ENCODE measurements at regions of chr6 and their contacts with region 1.

Region 1: DNA sequence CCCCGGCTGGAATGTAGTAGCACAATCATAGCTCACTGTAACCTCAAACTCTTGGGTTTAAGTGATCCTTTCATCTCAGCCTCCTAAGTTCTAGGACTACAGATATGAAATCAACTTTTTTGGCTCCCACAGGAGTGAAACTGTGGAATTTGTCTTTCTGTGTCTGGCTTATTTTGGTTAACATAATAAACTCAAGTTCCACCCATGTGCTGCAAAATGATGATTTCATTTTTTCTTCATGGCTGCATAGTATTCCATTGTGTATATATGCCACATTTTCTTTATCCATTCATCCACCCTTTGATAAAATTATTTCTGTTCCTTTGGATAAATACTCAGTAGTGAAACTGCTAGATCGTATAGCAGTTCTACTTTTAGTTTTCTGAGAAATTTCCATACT is 29.9 kb downstream of the RNGTT start:
- DNase-seq: no peak
- H3K4me3 ChIP-seq: no peak overlapping the region
- H3K27ac ChIP-seq: no peak overlapping the region
- H3K4me1 ChIP-seq: no peaks in the 10 kb centered on the region
- H3K27me3 ChIP-seq: no peaks in the 10 kb centered on the region
- CTCF ChIP-seq: no peak
- EP300 ChIP-seq: no peak
- POLR2A ChIP-seq: no peak

Region 2: GRCh38 chr6:87274660-87275274 is 1658.8 kb before region 1 on chr6:
- in situ Hi-C with region 1: no loop called
- intact Hi-C with region 1: loop called (anchors 5 kb)
- DNase-seq: no peak
- H3K4me3 ChIP-seq: no peak overlapping the region
- H3K27ac ChIP-seq: no peak overlapping the region
- H3K4me1 ChIP-seq: peaks cover 0 to 16% (median 1%) of the 10 kb centered on the region in 4 donors
- H3K27me3 ChIP-seq: no peaks in the 10 kb centered on the region
- CTCF ChIP-seq: no peak
- EP300 ChIP-seq: no peak
- POLR2A ChIP-seq: no peak

Region 3: DNA sequence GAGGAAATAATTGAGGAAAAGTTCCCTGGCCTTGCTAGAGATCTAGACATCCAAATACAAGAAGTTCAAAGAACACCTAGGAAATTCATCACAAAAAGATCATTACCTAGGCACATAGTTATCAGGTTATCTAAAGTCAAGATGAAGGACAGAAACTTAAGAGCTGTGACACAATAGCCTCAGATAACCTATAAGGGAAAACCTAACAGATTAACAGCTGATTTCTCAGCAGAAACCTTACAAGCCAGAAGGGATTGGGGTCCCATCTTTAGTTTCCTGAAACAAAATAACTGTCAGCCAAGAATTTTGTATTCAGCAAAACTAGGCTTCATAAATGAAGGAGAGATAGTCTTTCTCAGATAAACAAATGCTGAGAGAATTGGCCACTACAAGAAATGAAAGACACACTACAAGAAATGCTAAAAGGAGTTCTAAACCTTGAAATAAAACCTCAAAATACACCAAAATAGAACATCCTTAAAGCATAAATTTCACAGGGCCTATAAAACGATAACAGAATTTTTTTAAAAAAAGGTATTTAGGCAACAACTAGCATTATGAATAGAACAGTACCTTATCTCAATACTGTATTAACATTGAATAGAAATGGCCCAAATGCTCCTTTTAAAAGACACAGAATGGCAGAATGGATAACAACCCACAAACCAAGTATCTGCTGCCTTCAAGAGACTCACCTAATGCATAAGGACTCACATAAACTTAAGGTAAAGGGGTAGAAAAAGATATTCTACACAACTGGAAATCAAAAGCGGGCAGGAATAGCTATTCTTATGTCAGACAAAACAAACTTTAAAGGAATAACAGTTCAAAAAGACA is 20.2 kb after region 1 on chr6:
- in situ Hi-C with region 1: no loop called
- intact Hi-C with region 1: loop called (anchors 2 kb)
- DNase-seq: no peak
- H3K4me3 ChIP-seq: no peak overlapping the region
- H3K27ac ChIP-seq: no peak overlapping the region
- H3K4me1 ChIP-seq: no peaks in the 10 kb centered on the region
- H3K27me3 ChIP-seq: no peaks in the 10 kb centered on the region
- CTCF ChIP-seq: no peak
- EP300 ChIP-seq: no peak
- POLR2A ChIP-seq: no peak